Sigmoid colon (tissue), 7 donors: ENCODE measurements at regions of chr4 and their contacts with region 1.

Region 1: DNA sequence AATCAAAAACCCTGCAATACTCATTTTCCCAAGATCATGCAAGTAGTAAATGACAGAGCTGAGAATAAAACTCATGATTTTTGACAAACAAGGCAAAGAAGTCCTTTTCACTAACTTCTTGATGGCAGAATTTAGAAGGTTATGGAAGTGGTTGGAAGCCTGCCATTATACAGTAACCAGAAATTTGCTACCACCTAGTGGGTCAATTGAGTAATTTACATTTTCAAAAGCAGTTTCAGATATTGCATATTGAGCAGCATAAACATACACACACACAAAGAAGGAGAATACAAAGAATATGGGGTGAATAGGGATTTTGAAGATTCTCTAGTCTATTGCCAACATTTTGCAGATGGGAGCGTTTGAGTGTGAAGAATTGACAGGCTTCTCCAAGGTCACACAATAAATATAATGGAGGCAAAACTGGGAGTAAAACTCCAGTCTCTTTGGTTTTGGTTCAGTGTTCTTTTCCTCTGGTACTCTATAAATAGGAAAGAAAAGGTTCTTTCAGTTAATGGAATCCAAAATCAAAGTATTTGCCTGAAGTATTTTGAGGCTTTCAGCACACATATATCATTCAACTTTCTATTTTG is 70.2 kb downstream of the GC start:
- DNase-seq: no peak
- H3K4me3 ChIP-seq: no peak overlapping the region
- H3K27ac ChIP-seq: no peak overlapping the region
- H3K4me1 ChIP-seq: no peaks in the 10 kb centered on the region
- H3K27me3 ChIP-seq: no peaks in the 10 kb centered on the region
- CTCF ChIP-seq: peak in 3 of 4 experiments; percentile 50 to 57 (median 51)
- EP300 ChIP-seq: no peak
- POLR2A ChIP-seq: no peak

Region 2: DNA sequence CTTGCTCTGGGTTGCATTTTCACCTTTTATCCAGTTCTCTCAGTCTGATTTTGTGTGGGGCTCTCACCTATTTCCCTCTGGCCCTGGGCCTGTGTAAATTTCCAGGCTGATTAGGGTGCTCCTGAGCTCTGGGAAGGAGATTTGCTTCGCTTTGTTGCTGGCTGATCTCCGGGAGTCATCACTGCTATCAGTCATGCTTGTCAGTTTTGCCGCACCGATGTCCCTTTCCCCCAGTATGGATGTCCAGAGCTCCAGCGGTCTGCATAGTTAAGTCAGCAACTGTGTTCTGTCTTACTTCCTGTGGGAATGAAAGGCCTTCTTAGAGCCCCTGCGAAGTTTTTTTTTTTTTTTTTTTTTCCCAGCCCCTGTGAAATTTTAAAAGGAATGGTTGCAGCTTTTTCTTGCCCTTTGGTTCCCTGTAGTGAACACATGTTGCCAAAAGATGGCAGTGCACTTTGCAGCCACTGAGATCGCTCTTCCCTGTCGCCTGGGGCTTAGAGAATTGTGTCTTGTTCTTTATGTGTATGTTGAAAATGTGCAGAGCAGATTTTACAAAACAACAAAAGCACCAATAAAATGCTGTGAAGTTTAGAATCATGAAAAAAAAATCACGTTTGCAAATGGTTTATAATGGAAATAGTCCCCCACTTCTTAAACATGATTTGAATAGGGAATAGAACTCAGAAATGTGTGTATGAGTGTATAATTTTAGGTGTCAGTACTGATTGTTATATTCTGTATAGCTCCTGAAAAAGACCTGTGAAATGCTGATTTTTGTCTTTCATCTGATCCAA is 484.0 kb before region 1 on chr4:
- intact Hi-C with region 1: loop called (anchors 2 kb)
- DNase-seq: no peak
- H3K4me3 ChIP-seq: no peak overlapping the region
- H3K27ac ChIP-seq: peak overlapping the region in 1 of 4 donors; percentile 43
- H3K4me1 ChIP-seq: peaks cover 0 to 31% (median 20%) of the 10 kb centered on the region in 4 donors
- H3K27me3 ChIP-seq: no peaks in the 10 kb centered on the region
- CTCF ChIP-seq: peak; percentile 7 to 58 (median 32)
- EP300 ChIP-seq: no peak
- POLR2A ChIP-seq: no peak